Caco-2 (cell line): ENCODE measurements at regions of chr2 and their contacts with region 1.

Region 1: GRCh38 chr2:130181325-130181879 is at the start of gene SMPD4:
- DNase-seq: peak; percentile 98
- H3K4me3 ChIP-seq: peak within 1 kb of the TSS; percentile 100
- H3K4me3 Mint-ChIP-seq: peak within 1 kb of the TSS; percentile 96
- H3K27ac Mint-ChIP-seq: peak within 1 kb of the TSS; percentile 94
- H3K4me1 ChIP-seq: peaks cover 8% of the 10 kb centered on the region; the same call in 1 of the 2 replicates
- H3K4me1 Mint-ChIP-seq: peaks cover 8% of the 10 kb centered on the region
- H3K27me3 ChIP-seq: no peaks in the 10 kb centered on the region
- H3K27me3 Mint-ChIP-seq: no peaks in the 10 kb centered on the region
- CTCF ChIP-seq: no peak
- total RNA-seq, gene SMPD4: 140 and 141 TPM in 2 replicates

Region 2: GRCh38 chr2:129708221-129708967 is 473.0 kb before region 1 on chr2:
- CTCF ChIA-PET with region 1: no interaction called
- POLR2A ChIA-PET with region 1: no interaction called
- intact Hi-C with region 1: no loop called
- DNase-seq: no peak
- H3K4me3 ChIP-seq: no peak overlapping the region
- H3K4me3 Mint-ChIP-seq: no peak overlapping the region
- H3K27ac Mint-ChIP-seq: no peak overlapping the region
- H3K4me1 ChIP-seq: no peaks in the 10 kb centered on the region
- H3K4me1 Mint-ChIP-seq: no peaks in the 10 kb centered on the region
- H3K27me3 ChIP-seq: no peaks in the 10 kb centered on the region
- H3K27me3 Mint-ChIP-seq: no peaks in the 10 kb centered on the region
- CTCF ChIP-seq: peak in 1 of 2 experiments; percentile 3

Region 3: GRCh38 chr2:129936334-129936934 is 245.0 kb before region 1 on chr2:
- CTCF ChIA-PET with region 1: no interaction called
- POLR2A ChIA-PET with region 1: no interaction called
- intact Hi-C with region 1: no loop called
- DNase-seq: no peak
- H3K4me3 ChIP-seq: no peak overlapping the region
- H3K4me3 Mint-ChIP-seq: no peak overlapping the region
- H3K27ac Mint-ChIP-seq: no peak overlapping the region
- H3K4me1 ChIP-seq: peaks cover 13% of the 10 kb centered on the region
- H3K4me1 Mint-ChIP-seq: peaks cover 17% of the 10 kb centered on the region
- H3K27me3 ChIP-seq: no peaks in the 10 kb centered on the region
- H3K27me3 Mint-ChIP-seq: no peaks in the 10 kb centered on the region
- CTCF ChIP-seq: no peak

Region 4: GRCh38 chr2:130156624-130157004 is 24.8 kb before region 1 on chr2:
- CTCF ChIA-PET with region 1: no interaction called
- POLR2A ChIA-PET with region 1: no interaction called
- intact Hi-C with region 1: loop called (anchors 1 kb)
- DNase-seq: no peak
- H3K4me3 ChIP-seq: no peak overlapping the region
- H3K4me3 Mint-ChIP-seq: no peak overlapping the region
- H3K27ac Mint-ChIP-seq: no peak overlapping the region
- H3K4me1 ChIP-seq: no peaks in the 10 kb centered on the region
- H3K4me1 Mint-ChIP-seq: no peaks in the 10 kb centered on the region
- H3K27me3 ChIP-seq: no peaks in the 10 kb centered on the region
- H3K27me3 Mint-ChIP-seq: no peaks in the 10 kb centered on the region
- CTCF ChIP-seq: no peak

Region 5: GRCh38 chr2:130198343-130198742 is 16.9 kb after region 1 on chr2 and contains the start of gene TUBA3E:
- CTCF ChIA-PET with region 1: no interaction called
- POLR2A ChIA-PET with region 1: no interaction called
- intact Hi-C with region 1: no loop called
- DNase-seq: no peak
- H3K4me3 ChIP-seq: no peak within 1 kb of the TSS
- H3K4me3 Mint-ChIP-seq: no peak within 1 kb of the TSS
- H3K27ac Mint-ChIP-seq: no peak within 1 kb of the TSS
- H3K4me1 ChIP-seq: peaks cover 15% of the 10 kb centered on the region
- H3K4me1 Mint-ChIP-seq: peaks cover 6% of the 10 kb centered on the region
- H3K27me3 ChIP-seq: no peaks in the 10 kb centered on the region
- H3K27me3 Mint-ChIP-seq: no peaks in the 10 kb centered on the region
- CTCF ChIP-seq: no peak
- total RNA-seq, gene TUBA3E: 0.57 TPM in 1 of 2 replicates, not detected in the other

Region 6: GRCh38 chr2:130241041-130241707 is 59.8 kb after region 1 on chr2:
- CTCF ChIA-PET with region 1: interaction called, 5 read pairs
- POLR2A ChIA-PET with region 1: interaction called, 4 read pairs
- intact Hi-C with region 1: loop called (anchors 2 kb)
- DNase-seq: peak; percentile 66 to 83
- H3K4me3 ChIP-seq: no peak overlapping the region
- H3K4me3 Mint-ChIP-seq: no peak overlapping the region
- H3K27ac Mint-ChIP-seq: peak overlapping the region; percentile 90
- H3K4me1 ChIP-seq: peaks cover 4% of the 10 kb centered on the region; the same call in 1 of the 2 replicates
- H3K4me1 Mint-ChIP-seq: peaks cover 12% of the 10 kb centered on the region
- H3K27me3 ChIP-seq: no peaks in the 10 kb centered on the region
- H3K27me3 Mint-ChIP-seq: no peaks in the 10 kb centered on the region
- CTCF ChIP-seq: no peak

Region 7: DNA sequence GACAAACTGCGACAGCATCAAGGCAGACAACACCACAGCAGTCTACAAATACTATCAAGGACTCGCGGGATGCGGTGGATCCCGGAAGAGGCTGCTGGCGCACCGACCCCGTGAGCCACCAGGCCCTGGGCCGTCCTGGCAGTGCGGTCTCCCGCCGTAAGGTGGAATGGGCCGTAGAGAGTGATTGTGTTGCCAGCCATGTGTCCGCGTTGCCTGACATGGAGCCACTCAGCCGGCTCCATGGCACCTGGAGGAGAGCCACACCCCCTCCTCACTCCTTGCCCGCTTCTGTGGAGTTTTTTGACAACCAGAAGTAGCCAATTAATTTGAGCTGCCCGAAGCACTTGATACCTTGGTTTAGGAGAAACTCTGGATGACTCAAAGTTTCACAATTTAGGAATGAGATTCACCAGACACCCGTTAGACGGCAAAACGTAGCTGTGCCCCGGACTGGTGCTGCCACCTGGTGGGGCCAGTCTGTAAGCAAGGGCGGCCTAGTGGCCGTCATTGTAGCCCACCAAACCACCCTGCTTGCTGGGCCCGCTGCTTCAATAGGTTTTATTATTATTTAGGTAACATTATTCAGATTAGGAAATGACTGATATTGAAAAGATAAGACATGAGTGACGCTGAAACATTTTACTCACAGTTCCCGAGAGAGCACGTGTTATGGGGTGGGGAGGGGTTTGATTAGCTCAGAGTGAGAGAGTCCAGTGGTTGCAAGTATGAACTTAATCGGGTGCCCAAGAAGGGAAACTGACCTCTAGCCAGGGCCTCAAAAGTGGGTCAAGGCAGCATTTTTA is 151.1 kb after region 1 on chr2:
- CTCF ChIA-PET with region 1: interaction called, 11 read pairs
- POLR2A ChIA-PET with region 1: no interaction called
- intact Hi-C with region 1: loop called (anchors 1 kb)
- DNase-seq: peak; percentile 73 to 89
- H3K4me3 ChIP-seq: no peak overlapping the region
- H3K4me3 Mint-ChIP-seq: peak overlapping the region; percentile 39
- H3K27ac Mint-ChIP-seq: no peak overlapping the region
- H3K4me1 ChIP-seq: peaks cover 12% of the 10 kb centered on the region
- H3K4me1 Mint-ChIP-seq: no peaks in the 10 kb centered on the region
- H3K27me3 ChIP-seq: no peaks in the 10 kb centered on the region
- H3K27me3 Mint-ChIP-seq: peaks cover 6% of the 10 kb centered on the region
- CTCF ChIP-seq: peak; percentile 94 to 97